PC-9 (cell line): ENCODE measurements at regions of chr20 and their contacts with region 1.

Region 1: DNA sequence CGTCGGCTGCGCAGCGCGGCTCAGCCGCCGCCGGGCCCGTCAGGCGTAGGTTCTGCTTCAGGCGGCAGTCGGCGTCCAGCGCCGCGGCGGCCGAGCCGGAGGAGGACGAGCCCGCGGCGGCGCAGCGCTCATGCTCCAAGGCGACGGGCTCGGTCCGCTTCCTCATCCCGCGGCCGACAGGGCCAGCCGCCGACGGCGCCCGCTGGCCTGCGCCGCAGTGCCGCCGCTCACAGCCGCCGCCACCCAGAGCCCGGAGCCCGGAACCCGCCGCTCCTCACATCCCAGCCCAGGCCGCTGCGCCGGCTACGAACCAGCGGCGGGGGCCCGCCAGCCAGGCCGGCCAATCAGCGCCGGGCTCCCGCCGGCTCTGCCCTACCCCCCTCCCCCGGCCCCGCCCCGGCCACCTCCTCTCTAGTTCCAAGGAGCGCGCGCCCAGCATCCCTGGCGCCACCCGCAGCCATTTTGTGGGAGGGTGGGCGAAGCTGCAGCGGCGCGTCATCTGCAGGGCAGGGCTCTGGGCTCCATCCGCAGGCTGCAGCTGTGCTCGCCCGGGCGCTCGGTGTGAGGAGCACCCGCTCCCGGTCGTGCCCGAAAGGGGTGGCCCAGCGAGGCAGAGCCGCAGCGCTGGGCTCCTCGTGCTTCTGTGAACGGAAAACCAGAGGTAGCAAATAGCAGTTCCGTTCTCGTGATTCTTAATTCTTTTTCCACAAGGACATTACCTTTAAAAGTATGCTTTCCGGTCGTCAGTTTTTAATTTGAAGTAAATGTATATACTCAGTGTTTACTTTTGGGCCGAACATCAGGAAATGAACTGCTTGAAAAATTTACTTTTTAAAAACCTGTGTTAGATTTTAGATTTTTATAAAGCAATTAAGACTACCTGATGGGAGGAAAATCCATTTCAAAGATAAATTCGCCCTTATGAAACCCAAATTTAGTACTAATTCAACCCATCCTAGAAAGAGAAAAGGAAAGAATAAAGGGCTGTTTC is at the start of gene ABHD12:
- DNase-seq: peak; percentile 84 to 96
- H3K4me3 ChIP-seq: peak within 1 kb of the TSS; percentile 93
- H3K27ac ChIP-seq: peak within 1 kb of the TSS; percentile 48
- H3K4me1 ChIP-seq: peaks cover 18% of the 10 kb centered on the region
- H3K27me3 ChIP-seq: no peaks in the 10 kb centered on the region
- CTCF ChIP-seq: no peak
- total RNA-seq, gene ABHD12: 60.1 and 72.6 TPM in 2 replicates

Region 2: GRCh38 chr20:25044660-25045342 is 346.0 kb before region 1 on chr20:
- CTCF ChIA-PET with region 1: interaction called, 16 read pairs
- POLR2A ChIA-PET with region 1: no interaction called
- intact Hi-C with region 1: no loop called
- DNase-seq: no peak
- H3K4me3 ChIP-seq: no peak overlapping the region
- H3K27ac ChIP-seq: no peak overlapping the region
- H3K4me1 ChIP-seq: peaks cover 14% of the 10 kb centered on the region; the same call in 1 of the 2 replicates
- H3K27me3 ChIP-seq: no peaks in the 10 kb centered on the region
- CTCF ChIP-seq: no peak

Region 3: DNA sequence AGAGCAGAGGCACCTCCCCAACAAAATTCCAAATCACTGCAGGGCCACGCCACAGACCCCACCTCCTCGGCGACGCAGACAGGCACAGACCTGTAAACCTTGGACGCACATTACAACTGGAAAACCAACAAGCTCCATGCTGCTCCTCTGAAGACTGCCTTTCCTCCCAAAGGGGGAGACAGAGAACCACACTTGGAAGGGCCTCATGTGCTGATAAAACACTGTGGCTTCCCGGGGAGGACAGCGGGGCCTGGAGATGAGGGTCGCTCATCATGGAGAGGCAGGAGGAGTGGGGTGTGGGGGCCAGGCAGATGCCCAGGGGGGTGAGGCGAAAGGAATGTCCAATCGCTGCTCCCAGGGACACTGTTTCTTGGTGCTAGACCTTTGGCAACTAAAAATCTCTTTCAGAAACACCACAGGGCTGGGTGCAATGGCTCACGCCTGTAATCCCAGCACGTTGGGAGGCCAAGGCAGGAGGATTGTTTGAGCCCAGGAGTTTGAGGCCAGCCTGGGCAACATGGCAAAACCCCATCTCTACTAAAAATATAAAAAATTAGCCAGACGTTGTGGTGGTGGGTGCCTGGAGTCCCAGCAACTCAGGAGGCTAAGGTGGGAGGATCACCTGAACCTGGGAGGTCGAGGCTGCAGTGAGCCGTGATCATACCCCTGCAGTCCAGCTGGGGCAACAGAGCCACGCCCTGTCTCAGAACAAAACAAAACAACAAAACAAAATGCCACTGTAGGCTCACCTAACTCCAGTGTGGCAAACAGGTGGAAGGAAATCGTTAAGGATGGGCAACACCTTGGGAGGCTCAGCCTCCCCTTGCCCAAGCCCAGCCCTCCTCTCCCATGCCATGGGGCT is 54.0 kb before region 1 on chr20:
- CTCF ChIA-PET with region 1: no interaction called
- POLR2A ChIA-PET with region 1: no interaction called
- intact Hi-C with region 1: no loop called
- DNase-seq: no peak
- H3K4me3 ChIP-seq: no peak overlapping the region
- H3K27ac ChIP-seq: no peak overlapping the region
- H3K4me1 ChIP-seq: no peaks in the 10 kb centered on the region
- H3K27me3 ChIP-seq: no peaks in the 10 kb centered on the region
- CTCF ChIP-seq: peak; percentile 46

Region 4: DNA sequence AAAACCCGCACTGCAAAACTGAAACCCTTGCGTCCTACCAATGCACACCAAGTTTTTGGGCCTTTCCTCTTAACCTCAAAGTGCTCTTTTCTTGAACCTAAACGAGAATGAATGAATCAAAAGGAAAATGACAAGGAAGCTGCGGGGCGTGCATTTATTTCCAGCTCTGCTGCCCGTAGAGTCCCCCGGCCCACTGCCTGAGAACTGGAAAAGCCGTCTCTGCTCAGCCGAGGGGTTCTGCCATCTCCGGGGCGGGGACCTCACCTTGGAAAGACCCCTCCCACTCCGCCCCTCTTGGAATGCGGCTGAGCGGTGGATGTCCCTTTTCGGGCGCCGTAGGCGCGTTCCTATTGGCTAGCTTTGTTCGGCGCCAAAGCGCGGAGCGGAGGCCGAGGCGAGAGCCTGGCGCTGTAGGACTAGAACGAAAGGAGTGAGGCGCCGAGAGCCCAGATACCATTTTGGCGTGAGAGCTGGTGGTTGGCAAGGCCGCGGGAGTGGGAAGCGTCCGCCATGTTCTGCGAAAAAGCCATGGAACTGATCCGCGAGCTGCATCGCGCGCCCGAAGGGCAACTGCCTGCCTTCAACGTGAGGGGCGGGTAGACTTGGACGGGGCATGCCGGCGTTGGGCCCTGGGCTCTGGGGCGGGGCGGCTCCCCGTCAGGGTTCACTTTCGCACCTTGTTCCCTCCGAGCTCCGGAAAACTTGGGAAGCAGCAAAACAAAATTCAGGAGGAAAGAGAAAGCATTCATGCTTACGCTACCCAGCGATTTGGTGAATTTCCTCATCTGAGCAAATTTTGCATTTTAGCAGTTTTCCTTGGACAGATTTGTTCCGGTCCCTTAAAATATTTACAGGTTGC is 16.7 kb after region 1 on chr20 and contains the start of gene GINS1:
- CTCF ChIA-PET with region 1: no interaction called
- POLR2A ChIA-PET with region 1: interaction called, 23 read pairs
- intact Hi-C with region 1: no loop called
- DNase-seq: peak; percentile 78 to 95
- H3K4me3 ChIP-seq: peak within 1 kb of the TSS; percentile 74
- H3K27ac ChIP-seq: 0 out of 2 replicates have a peak within 1 kb of the TSS, but pooled peaks have one; percentile 7
- H3K4me1 ChIP-seq: peaks cover 12% of the 10 kb centered on the region; the same call in 1 of the 2 replicates
- H3K27me3 ChIP-seq: no peaks in the 10 kb centered on the region
- CTCF ChIP-seq: no peak
- total RNA-seq, gene GINS1: 26.6 and 27.8 TPM in 2 replicates